Psoas muscle (tissue), 8 donors: ENCODE measurements at regions of chr1 and their contacts with region 1.

Region 1: DNA sequence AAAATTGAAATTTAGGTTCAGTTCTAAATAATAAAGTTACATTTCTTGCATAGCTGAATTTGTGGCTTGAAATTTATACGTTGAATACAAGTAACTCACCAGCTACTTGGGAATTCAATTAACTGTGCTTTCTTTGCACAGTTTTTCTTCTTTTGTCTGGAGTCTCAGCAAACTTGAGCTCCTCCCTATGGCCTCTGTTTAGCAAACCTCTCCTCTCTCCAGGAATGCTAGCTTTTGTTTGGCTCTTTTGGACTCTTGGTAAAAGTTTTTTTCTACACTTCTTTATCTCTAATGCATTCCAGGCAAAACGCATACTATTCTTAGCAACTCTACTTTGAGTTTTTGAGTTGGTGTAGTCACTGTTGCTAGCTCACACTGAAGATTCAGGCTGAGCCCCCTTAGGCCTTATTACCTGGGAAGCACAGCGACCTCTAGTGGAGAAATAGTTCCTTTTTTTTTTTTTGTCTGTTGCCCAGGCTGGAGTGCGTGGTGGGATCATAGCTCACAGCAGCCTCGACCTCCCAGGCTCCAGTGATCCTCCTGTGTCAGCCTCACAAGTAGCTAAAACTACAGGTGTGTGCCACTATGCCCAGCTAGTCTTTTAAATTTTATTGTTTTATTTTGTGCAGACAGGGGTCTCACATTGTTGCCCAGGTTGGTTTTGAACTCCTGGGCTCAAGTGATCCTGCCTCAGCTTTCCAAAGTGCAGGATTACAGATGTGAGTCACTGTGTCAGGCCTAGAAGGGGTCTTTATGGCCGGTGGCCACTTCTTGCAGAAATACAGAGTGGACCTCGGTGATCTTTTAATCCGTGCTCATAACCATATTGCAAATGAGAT is 61.7 kb downstream of the CASQ2 start:
- DNase-seq: no peak
- ATAC-seq: peak in 3 of 4 donors; percentile 43 to 67 (median 55)
- H3K4me3 ChIP-seq: no peak overlapping the region
- H3K27ac ChIP-seq: no peak overlapping the region
- H3K4me1 ChIP-seq: no peaks in the 10 kb centered on the region
- H3K27me3 ChIP-seq: no peaks in the 10 kb centered on the region
- CTCF ChIP-seq: peak; percentile 75

Region 2: GRCh38 chr1:114780344-114781226 is 926.2 kb before region 1 on chr1 and contains the start of gene SIKE1:
- intact Hi-C with region 1: no loop called
- DNase-seq: peak; percentile 93 to 96
- ATAC-seq: peak; percentile 94 to 98 (median 96)
- H3K4me3 ChIP-seq: peak within 1 kb of the TSS; percentile 71
- H3K27ac ChIP-seq: peak within 1 kb of the TSS; percentile 94
- H3K4me1 ChIP-seq: peaks cover 17% of the 10 kb centered on the region
- H3K27me3 ChIP-seq: no peaks in the 10 kb centered on the region
- CTCF ChIP-seq: peak; percentile 11
- total RNA-seq, gene SIKE1: 29.8 to 40.0 (median 34.7) TPM

Region 3: GRCh38 chr1:115545791-115546733 is 160.7 kb before region 1 on chr1:
- intact Hi-C with region 1: loop called in 1 of 2 experiments (anchors 5 kb)
- DNase-seq: peak in 1 of 2 donors; percentile 24
- ATAC-seq: peak; percentile 64 to 84 (median 70)
- H3K4me3 ChIP-seq: no peak overlapping the region
- H3K27ac ChIP-seq: no peak overlapping the region
- H3K4me1 ChIP-seq: no peaks in the 10 kb centered on the region
- H3K27me3 ChIP-seq: no peaks in the 10 kb centered on the region
- CTCF ChIP-seq: peak; percentile 48

Region 4: GRCh38 chr1:115609021-115609420 is 97.8 kb before region 1 on chr1:
- intact Hi-C with region 1: loop called (anchors 1 to 2 kb)
- DNase-seq: no peak
- ATAC-seq: no peak
- H3K4me3 ChIP-seq: no peak overlapping the region
- H3K27ac ChIP-seq: no peak overlapping the region
- H3K4me1 ChIP-seq: no peaks in the 10 kb centered on the region
- H3K27me3 ChIP-seq: no peaks in the 10 kb centered on the region
- CTCF ChIP-seq: no peak